ENCODE measurements at regions of chr1 and their contacts with region 1.

Region 1: DNA sequence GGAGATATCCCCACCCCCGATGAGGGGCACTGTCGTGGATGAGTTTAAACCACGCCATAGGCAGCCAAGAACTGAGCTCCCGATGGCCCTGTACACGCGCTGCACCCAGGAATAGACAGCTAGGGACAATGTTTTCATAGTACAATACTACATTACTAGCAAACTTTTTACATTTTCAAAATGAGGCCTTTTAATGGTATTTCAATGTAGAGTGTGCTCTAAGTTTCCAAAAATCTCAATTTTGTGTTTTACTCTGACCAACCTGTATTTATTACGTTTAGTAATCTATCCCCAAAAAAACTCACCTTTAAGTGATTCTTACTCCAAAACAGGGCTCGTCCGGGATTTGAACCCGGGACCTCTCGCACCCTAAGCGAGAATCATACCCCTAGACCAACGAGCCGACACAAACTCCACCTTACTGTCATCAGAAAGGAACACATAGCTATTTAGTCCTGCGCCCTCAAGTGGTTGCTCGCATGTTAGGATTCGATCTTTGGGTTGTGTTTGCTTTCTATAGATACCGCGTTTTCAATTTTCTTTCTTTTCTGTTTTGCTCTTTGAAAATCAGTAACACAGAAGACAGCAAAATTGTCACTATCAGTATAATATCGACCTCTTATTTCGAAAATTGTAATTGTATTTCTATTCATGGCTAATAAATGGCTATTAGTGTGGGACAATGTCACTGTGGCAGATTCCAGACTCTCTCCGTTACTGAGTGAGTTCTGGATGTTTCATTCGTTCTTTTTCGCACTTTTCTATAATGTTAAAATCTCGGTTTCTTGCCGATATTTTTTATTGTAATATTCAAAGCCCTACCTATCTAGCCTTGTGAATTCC is 6.4 kb upstream of the MPZL1 start:
- DNase-seq: peak; percentile 83
- H3K4me3 ChIP-seq: peak overlapping the region; percentile 79 to 85 (median 84)
- H3K27ac ChIP-seq: peak overlapping the region; percentile 89
- H3K4me1 ChIP-seq: peaks cover 13% of the 10 kb centered on the region
- H3K27me3 ChIP-seq: no peaks in the 10 kb centered on the region
- CTCF ChIP-seq: peak; percentile 88 to 99

Region 2: GRCh38 chr1:167553136-167554027 is 162.0 kb before region 1 on chr1 and contains the start of gene CREG1:
- CTCF ChIA-PET with region 1: no interaction called
- dilution Hi-C with region 1: loop called (anchors 5 kb)
- in situ Hi-C with region 1: no loop called
- intact Hi-C with region 1: no loop called
- DNase-seq: peak; percentile 92
- H3K4me3 ChIP-seq: peak within 1 kb of the TSS; percentile 65 to 89 (median 66)
- H3K27ac ChIP-seq: peak within 1 kb of the TSS; percentile 47
- H3K4me1 ChIP-seq: peaks cover 46% of the 10 kb centered on the region
- H3K27me3 ChIP-seq: no peaks in the 10 kb centered on the region
- CTCF ChIP-seq: no peak
- total RNA-seq, gene CREG1: 105 to 242 TPM

Region 3: GRCh38 chr1:167564612-167565270 is 150.6 kb before region 1 on chr1:
- CTCF ChIA-PET with region 1: interaction called, 12 read pairs
- dilution Hi-C with region 1: no loop called
- in situ Hi-C with region 1: no loop called
- intact Hi-C with region 1: no loop called
- DNase-seq: peak; percentile 51
- H3K4me3 ChIP-seq: no peak overlapping the region
- H3K27ac ChIP-seq: peak overlapping the region; percentile 46
- H3K4me1 ChIP-seq: peaks cover 60% of the 10 kb centered on the region
- H3K27me3 ChIP-seq: no peaks in the 10 kb centered on the region
- CTCF ChIP-seq: peak in 1 of 2 donors; percentile 16

Measured in mammary epithelial cell (primary cell).